ENCODE measurements at regions of chr5 and their contacts with region 1.

Region 1: GRCh38 chr5:159427180-159428012 is 97.1 kb upstream of the IL12B start:
- DNase-seq: no peak
- ATAC-seq: no peak
- H3K4me3 ChIP-seq: no peak overlapping the region
- H3K27ac ChIP-seq: no peak overlapping the region
- H3K4me1 ChIP-seq: no peaks in the 10 kb centered on the region
- H3K27me3 ChIP-seq: no peaks in the 10 kb centered on the region; a peak in 1 of 5 replicates
- CTCF ChIP-seq: no peak
- EP300 ChIP-seq: no peak
- POLR2A ChIP-seq: no peak
- RAD21 ChIP-seq: no peak

Region 2: DNA sequence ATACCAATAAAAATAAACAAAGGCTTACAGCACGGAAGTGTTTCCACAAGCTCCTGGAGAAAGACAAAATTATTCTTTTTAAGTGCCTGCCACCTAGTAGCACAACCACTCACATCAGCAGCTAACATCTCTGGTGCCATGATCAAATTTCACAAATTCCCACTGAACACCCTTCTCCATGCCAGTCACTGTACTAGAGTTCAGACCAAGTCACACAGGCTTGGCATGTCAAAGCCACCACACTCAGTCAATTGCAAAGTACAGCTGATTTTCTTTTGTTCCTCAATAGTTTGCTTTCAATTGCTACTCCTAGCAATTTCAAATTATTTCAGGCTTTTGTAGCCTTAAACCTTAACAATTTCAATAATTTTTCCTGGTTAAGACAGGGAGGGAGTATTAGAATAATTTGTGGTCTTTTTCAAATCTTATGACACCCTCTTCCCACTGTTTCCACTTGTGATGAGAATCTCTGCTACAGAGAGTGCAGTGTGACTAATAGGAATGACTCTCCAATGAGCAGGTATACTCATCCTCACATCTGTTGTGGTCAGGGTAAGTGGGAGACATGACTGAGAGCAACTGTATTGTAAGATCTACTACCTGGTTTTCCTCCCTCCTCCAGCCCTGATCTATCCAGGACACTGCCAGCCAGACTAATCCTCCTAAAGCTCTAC is 264.2 kb before region 1 on chr5:
- CTCF ChIA-PET with region 1: no interaction called
- POLR2A ChIA-PET with region 1: no interaction called
- in situ Hi-C with region 1: loop called (anchors 10 kb)
- intact Hi-C with region 1: no loop called
- DNase-seq: no peak
- ATAC-seq: no peak
- H3K4me3 ChIP-seq: no peak overlapping the region
- H3K27ac ChIP-seq: no peak overlapping the region
- H3K4me1 ChIP-seq: no peaks in the 10 kb centered on the region
- H3K27me3 ChIP-seq: no peaks in the 10 kb centered on the region
- CTCF ChIP-seq: no peak
- EP300 ChIP-seq: no peak
- POLR2A ChIP-seq: no peak
- RAD21 ChIP-seq: no peak

Region 3: GRCh38 chr5:159669559-159669958 is 242.2 kb after region 1 on chr5:
- CTCF ChIA-PET with region 1: no interaction called
- POLR2A ChIA-PET with region 1: no interaction called
- in situ Hi-C with region 1: no loop called
- intact Hi-C with region 1: no loop called
- DNase-seq: no peak
- ATAC-seq: no peak
- H3K4me3 ChIP-seq: no peak overlapping the region
- H3K27ac ChIP-seq: no peak overlapping the region
- H3K4me1 ChIP-seq: no peaks in the 10 kb centered on the region; a peak in 1 of 5 replicates
- H3K27me3 ChIP-seq: no peaks in the 10 kb centered on the region
- CTCF ChIP-seq: no peak
- EP300 ChIP-seq: no peak
- POLR2A ChIP-seq: no peak
- RAD21 ChIP-seq: no peak

Measured in K562 (cell line).